ENCODE measurements at regions of chr12 and their contacts with region 1.

Region 1: GRCh38 chr12:21657326-21658077 is at the start of gene LDHB:
- DNase-seq: peak; percentile 96
- H3K4me3 ChIP-seq: peak within 1 kb of the TSS; percentile 89
- H3K27ac ChIP-seq: peak within 1 kb of the TSS; percentile 81
- H3K4me1 ChIP-seq: peaks cover 26% of the 10 kb centered on the region
- CTCF ChIP-seq: no peak
- total RNA-seq, gene LDHB: 551 and 727 TPM in 2 replicates

Region 2: DNA sequence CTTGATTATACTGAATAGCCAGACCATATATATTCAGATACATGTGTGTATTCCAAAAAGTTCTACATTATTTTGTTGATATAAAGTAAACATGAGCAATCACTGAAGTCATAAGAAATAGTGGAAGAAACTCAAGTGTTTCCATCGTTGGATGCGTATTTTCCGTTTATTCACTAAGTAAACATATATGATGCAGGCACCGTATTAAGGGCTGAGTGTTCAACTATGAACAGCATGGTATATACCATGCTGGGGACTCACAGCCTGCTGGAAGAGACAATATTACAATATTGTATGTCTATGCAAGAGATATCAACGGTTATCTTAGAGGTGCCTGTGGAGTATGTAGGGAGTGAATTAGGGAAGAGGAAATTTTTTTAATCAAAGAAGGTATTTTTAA is 218.9 kb before region 1 on chr12:
- CTCF ChIA-PET with region 1: interaction called, 11 read pairs
- POLR2A ChIA-PET with region 1: interaction called, 7 read pairs
- intact Hi-C with region 1: loop called (anchors 2 kb)
- DNase-seq: peak; percentile 3
- H3K4me3 ChIP-seq: peak overlapping the region; percentile 90
- H3K27ac ChIP-seq: peak overlapping the region; percentile 65
- H3K4me1 ChIP-seq: peaks cover 16% of the 10 kb centered on the region
- CTCF ChIP-seq: no peak

Region 3: GRCh38 chr12:21501379-21501956 is 156.0 kb before region 1 on chr12 and contains the starts of genes GOLT1B and RECQL:
- CTCF ChIA-PET with region 1: no interaction called
- POLR2A ChIA-PET with region 1: interaction called, 9 read pairs
- intact Hi-C with region 1: loop called (anchors 1 kb)
- DNase-seq: peak; percentile 97
- H3K4me3 ChIP-seq: peak within 1 kb of the TSS; percentile 99
- H3K27ac ChIP-seq: peak within 1 kb of the TSS; percentile 82
- H3K4me1 ChIP-seq: peaks cover 31% of the 10 kb centered on the region
- CTCF ChIP-seq: no peak
- total RNA-seq, gene GOLT1B: 9.5 and 12.7 TPM in 2 replicates
- total RNA-seq, gene RECQL: 53.1 and 55.9 TPM in 2 replicates

Region 4: DNA sequence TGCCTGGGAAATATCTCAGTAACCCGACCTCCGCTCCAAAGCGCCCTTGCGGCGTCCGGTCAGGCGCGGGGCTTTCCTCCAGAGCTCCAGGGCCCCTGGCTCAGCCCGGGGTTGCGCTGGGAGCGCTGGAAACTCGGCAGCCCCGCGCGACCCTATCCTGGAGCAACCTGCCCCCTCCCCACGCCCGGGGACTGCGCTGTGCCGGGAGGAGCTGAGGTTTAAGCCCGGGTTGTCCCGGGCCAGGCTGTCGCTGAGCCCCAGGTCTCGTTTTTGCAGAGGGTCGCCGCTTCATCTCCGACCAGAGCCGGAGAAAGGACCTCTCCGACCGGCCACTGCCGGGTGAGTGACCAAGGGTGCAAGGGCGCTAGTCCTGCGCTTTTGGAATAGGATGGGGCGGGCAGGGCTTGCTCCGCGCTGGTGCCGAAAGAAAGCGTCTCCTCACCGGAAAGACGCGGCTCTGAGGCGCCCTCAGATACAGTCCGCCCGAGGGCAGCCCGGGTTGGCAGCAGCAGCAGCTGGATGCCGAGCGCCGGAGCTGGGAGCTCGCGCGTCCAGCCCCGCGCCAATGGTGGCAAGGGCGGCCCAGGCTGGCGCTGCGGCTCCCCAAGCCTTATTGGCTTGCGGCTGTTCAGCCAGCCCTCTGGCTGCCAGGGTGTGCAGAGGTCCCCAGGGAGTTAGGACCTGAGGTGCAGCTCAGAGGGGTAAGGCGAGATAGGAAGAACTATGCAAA is 129.9 kb before region 1 on chr12:
- CTCF ChIA-PET with region 1: no interaction called
- POLR2A ChIA-PET with region 1: interaction called, 3 read pairs
- intact Hi-C with region 1: loop called (anchors 5 kb)
- DNase-seq: peak; percentile 83
- H3K4me3 ChIP-seq: peak overlapping the region; percentile 65
- H3K27ac ChIP-seq: no peak overlapping the region
- H3K4me1 ChIP-seq: peaks cover 24% of the 10 kb centered on the region
- CTCF ChIP-seq: no peak

Region 5: GRCh38 chr12:21647179-21647578 is 10.3 kb before region 1 on chr12:
- CTCF ChIA-PET with region 1: no interaction called
- POLR2A ChIA-PET with region 1: interaction called, 11 read pairs
- intact Hi-C with region 1: no loop called
- DNase-seq: no peak
- H3K4me3 ChIP-seq: no peak overlapping the region
- H3K27ac ChIP-seq: no peak overlapping the region
- H3K4me1 ChIP-seq: peaks cover 7% of the 10 kb centered on the region
- CTCF ChIP-seq: no peak

Region 6: DNA sequence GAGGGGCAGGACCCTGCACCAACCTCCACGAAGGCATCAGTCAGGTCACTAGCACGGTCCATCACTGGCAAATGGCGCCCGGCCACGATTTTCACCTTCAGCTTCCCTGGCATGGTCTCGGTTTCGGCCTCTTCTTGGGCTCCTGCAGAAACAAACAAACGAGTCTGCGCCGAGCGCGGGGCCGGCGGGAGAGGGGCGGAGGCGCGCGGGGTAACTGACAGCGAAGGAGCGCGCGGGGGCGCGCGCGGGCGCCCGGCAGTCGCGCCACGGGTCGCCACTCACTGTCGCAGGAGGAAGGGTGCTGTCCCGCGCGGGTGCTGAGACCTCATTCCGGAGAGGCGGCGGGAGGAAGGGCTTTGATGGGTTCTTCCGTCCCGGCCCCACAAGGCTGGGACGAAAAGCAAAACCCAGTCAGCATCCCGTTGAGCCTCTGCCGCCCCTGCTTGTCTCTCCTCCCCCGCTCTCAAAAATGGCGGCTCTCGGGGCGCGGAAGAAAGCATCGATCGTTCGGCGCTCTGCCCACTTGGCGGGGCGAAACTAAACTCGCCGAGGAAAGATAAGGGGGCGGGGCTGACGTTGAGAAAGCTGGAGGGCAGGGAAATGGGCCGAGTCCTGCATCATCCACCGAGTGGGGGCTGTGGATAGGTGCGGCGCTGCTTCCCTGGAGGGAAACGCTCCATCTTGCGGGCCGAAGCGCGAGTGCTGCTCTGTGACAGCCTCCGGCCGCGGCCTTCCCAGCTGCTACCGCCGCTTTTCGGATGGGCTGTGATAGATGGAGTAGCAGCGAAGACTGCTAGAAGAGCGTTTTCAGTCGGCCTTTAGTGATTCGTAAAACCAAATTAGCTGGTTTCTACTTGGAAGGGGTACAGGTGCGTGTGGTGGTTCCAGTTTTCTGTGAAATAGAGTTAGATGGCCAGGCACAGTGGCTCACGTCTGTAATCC is 886.8 kb after region 1 on chr12 and contains the start of gene C2CD5:
- CTCF ChIA-PET with region 1: no interaction called
- POLR2A ChIA-PET with region 1: no interaction called
- intact Hi-C with region 1: loop called (anchors 1 kb)
- DNase-seq: peak; percentile 96
- H3K4me3 ChIP-seq: peak within 1 kb of the TSS; percentile 94
- H3K27ac ChIP-seq: peak within 1 kb of the TSS; percentile 78
- H3K4me1 ChIP-seq: peaks cover 24% of the 10 kb centered on the region
- CTCF ChIP-seq: peak; percentile 52; the same call in 1 of the 2 replicates
- total RNA-seq, gene C2CD5: 19.7 and 28.4 TPM in 2 replicates